Endothelial cell of umbilical vein (primary cell): ENCODE measurements at regions of chr17 and their contacts with region 1.

Region 1: GRCh38 chr17:64343853-64344637 is 46.6 kb downstream of the PECAM1 start:
- DNase-seq: peak; percentile 99
- H3K4me3 ChIP-seq: no peak overlapping the region
- H3K27ac ChIP-seq: peak overlapping the region; percentile 89
- H3K4me1 ChIP-seq: peaks cover 41% of the 10 kb centered on the region
- H3K27me3 ChIP-seq: no peaks in the 10 kb centered on the region
- CTCF ChIP-seq: no peak
- POLR2A ChIP-seq: peak; percentile 38

Region 2: GRCh38 chr17:64306850-64307463 is 37.1 kb before region 1 on chr17:
- CTCF ChIA-PET with region 1: interaction called, 3 read pairs
- POLR2A ChIA-PET with region 1: no interaction called
- dilution Hi-C with region 1: no loop called
- intact Hi-C with region 1: loop called (anchors 1 kb)
- DNase-seq: peak; percentile 84
- H3K4me3 ChIP-seq: no peak overlapping the region
- H3K27ac ChIP-seq: no peak overlapping the region
- H3K4me1 ChIP-seq: peaks cover 5% of the 10 kb centered on the region
- H3K27me3 ChIP-seq: no peaks in the 10 kb centered on the region
- CTCF ChIP-seq: peak; percentile 67 to 70
- POLR2A ChIP-seq: no peak

Region 3: DNA sequence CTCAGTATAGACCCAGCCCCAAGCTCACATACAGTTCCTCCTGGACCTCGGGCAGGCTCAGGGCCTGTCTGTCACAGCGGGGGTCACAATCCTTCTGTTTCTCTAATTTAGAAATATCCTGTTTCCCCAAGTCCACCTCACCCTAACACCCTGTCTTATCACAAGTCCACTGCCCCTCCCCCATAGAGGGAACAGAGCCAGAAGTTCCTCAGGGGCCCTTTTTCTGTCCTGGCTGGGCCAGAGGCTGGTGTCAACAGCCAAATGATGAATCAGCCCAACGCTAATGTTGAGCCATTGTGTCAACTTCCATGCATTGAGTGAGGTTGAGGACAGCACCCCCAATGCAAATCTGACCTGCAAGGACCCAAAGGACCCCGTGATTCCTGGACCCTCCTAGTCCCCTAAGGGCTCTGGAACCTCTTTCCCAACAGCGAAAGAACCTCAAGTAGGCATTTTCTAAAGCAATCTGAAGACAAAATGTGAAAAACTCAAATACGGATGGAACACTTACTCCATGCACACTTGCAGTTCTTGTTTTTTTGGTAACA is 12.0 kb before region 1 on chr17:
- CTCF ChIA-PET with region 1: interaction called, 32 read pairs
- POLR2A ChIA-PET with region 1: interaction called, 12 read pairs
- dilution Hi-C with region 1: no loop called
- intact Hi-C with region 1: loop called (anchors 1 kb)
- DNase-seq: peak; percentile 92
- H3K4me3 ChIP-seq: no peak overlapping the region
- H3K27ac ChIP-seq: peak overlapping the region; percentile 32
- H3K4me1 ChIP-seq: peaks cover 82% of the 10 kb centered on the region
- H3K27me3 ChIP-seq: no peaks in the 10 kb centered on the region
- CTCF ChIP-seq: no peak
- POLR2A ChIP-seq: peak; percentile 45

Region 4: DNA sequence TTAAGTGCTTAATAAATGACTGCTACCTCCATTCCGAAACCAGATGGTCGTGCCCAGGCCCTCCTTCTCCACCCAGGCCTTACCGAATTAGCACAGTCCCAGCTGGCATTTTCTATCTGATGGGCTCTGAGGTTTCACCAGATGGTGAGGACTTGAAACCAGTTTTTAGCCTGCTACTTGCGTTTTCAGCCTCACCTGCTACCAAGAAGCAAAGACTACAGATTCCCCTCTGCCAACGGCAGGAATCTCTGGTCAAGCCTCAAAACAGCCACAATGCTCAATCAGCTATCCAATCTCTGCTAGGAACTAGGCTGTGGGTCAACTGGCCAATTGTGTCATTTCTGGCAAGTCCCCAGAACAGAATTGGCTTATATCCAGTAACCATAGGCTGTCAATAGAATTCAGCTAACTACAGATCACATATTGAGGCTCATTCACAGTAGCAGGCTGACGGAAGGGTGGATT is 34.9 kb after region 1 on chr17:
- CTCF ChIA-PET with region 1: interaction called, 3 read pairs
- POLR2A ChIA-PET with region 1: interaction called, 3 read pairs
- dilution Hi-C with region 1: no loop called
- intact Hi-C with region 1: loop called (anchors 2 kb)
- DNase-seq: peak; percentile 83
- H3K4me3 ChIP-seq: no peak overlapping the region
- H3K27ac ChIP-seq: peak overlapping the region; percentile 31
- H3K4me1 ChIP-seq: peaks cover 54% of the 10 kb centered on the region
- H3K27me3 ChIP-seq: no peaks in the 10 kb centered on the region
- CTCF ChIP-seq: no peak
- POLR2A ChIP-seq: peak; percentile 59